ENCODE measurements at regions of chr14 and their contacts with region 1.

Region 1: DNA sequence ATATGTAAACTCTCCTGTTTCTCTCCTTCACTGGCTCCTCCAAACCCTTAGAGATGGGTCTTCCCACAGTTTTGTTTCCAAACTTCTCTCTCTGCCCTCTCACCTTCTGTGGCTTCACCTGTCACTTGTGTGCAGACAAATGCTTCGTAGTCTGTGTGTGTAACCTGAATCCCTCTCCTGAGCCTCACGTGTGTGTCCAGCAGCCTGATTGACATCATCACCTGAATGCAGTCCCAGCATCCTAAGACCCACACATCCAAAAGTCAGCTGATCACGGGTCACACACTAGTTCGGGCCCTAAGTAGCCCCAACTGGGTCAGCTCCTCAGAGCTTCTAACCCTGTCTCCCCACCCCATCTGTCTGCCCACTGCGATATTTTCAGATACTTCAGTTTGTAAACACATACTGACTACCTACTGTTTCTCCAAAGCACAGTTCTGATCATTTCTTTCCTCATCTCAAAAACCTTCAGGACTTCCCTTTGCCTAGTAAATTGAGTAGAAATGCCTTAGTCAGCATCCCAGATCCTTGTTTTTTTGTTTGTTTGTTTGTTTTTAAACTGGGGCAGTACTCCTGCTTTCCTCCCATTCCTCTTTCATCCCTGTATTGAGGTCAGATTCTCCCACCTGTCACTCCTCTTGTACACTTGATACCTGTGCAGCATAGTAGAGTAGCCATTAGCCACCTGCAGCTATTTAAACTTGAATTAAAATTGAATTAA is 23.7 kb downstream of the FNTB start:
- DNase-seq: no peak
- H3K4me3 ChIP-seq: no peak overlapping the region
- H3K27ac ChIP-seq: no peak overlapping the region
- H3K4me1 ChIP-seq: no peaks in the 10 kb centered on the region
- H3K27me3 ChIP-seq: no peaks in the 10 kb centered on the region
- CTCF ChIP-seq: no peak

Region 2: GRCh38 chr14:64823305-64823861 is 187.0 kb before region 1 on chr14:
- CTCF ChIA-PET with region 1: no interaction called
- POLR2A ChIA-PET with region 1: no interaction called
- intact Hi-C with region 1: no loop called
- DNase-seq: peak; percentile 74
- H3K4me3 ChIP-seq: no peak overlapping the region
- H3K27ac ChIP-seq: no peak overlapping the region
- H3K4me1 ChIP-seq: peaks cover 9% of the 10 kb centered on the region
- H3K27me3 ChIP-seq: no peaks in the 10 kb centered on the region
- CTCF ChIP-seq: peak; percentile 69

Region 3: GRCh38 chr14:64841121-64841651 is 169.2 kb before region 1 on chr14:
- CTCF ChIA-PET with region 1: no interaction called
- POLR2A ChIA-PET with region 1: no interaction called
- intact Hi-C with region 1: no loop called
- DNase-seq: peak; percentile 23
- H3K4me3 ChIP-seq: no peak overlapping the region
- H3K27ac ChIP-seq: no peak overlapping the region
- H3K4me1 ChIP-seq: no peaks in the 10 kb centered on the region
- H3K27me3 ChIP-seq: peaks cover 38% of the 10 kb centered on the region
- CTCF ChIP-seq: no peak; the same call in 1 of the 2 replicates

Region 4: GRCh38 chr14:65229751-65230749 is 219.7 kb after region 1 on chr14:
- CTCF ChIA-PET with region 1: interaction called, 12 read pairs
- POLR2A ChIA-PET with region 1: no interaction called
- intact Hi-C with region 1: no loop called
- DNase-seq: peak; percentile 66
- H3K4me3 ChIP-seq: peak overlapping the region; percentile 12
- H3K27ac ChIP-seq: peak overlapping the region; percentile 70
- H3K4me1 ChIP-seq: peaks cover 26% of the 10 kb centered on the region
- H3K27me3 ChIP-seq: no peaks in the 10 kb centered on the region
- CTCF ChIP-seq: no peak

Region 5: DNA sequence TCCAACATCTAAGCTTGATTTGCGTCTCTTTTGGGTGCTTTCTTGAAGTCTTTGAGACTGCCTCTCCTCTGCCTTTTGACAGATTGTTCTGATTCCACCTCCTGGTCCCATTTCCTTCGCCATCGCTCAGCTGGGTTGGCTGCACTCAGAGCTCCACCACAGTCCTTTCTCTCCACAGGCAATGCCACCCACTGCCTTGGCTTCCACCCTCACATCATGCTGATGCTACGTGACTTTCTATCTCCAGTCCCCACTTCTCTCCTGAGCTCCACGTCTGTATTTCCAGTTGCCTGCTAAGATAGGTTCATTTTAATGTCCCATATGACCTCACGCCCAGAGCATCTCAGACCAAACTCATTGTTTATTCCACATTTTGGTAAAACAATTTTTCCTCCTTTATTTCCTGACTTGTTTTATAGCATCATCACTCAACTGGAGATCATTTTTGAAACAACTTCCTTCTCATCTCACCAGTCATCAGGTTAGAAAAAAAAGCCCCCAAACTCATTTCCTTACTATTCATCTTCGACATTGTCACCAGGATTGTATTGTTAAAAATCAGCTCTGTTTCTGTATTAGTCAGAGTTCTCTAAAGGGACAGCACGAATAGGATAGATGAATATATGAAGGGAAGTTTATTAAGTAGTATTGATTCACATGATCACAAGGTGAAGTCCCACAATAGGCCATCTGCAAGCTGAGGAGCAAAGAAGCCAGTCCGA is 794.5 kb after region 1 on chr14:
- CTCF ChIA-PET with region 1: no interaction called
- POLR2A ChIA-PET with region 1: no interaction called
- intact Hi-C with region 1: no loop called
- DNase-seq: no peak
- H3K4me3 ChIP-seq: no peak overlapping the region
- H3K27ac ChIP-seq: no peak overlapping the region
- H3K4me1 ChIP-seq: no peaks in the 10 kb centered on the region
- H3K27me3 ChIP-seq: no peaks in the 10 kb centered on the region
- CTCF ChIP-seq: no peak